Sigmoid colon (tissue), 7 donors: ENCODE measurements at regions of chr11 and their contacts with region 1.

Region 1: GRCh38 chr11:7513234-7514098 is at the start of gene PPFIBP2:
- DNase-seq: peak; percentile 89
- H3K4me3 ChIP-seq: peak within 1 kb of the TSS; percentile 53 to 81 (median 74)
- H3K27ac ChIP-seq: peak within 1 kb of the TSS; percentile 79 to 89 (median 84)
- H3K4me1 ChIP-seq: peaks cover 0 to 29% (median 21%) of the 10 kb centered on the region in 4 donors
- H3K27me3 ChIP-seq: no peaks in the 10 kb centered on the region
- CTCF ChIP-seq: peak; percentile 12 to 64 (median 56)
- EP300 ChIP-seq: no peak
- POLR2A ChIP-seq: peak; percentile 33 to 40
- total RNA-seq, gene PPFIBP2: 4.1 to 11.6 (median 9.2) TPM

Region 2: DNA sequence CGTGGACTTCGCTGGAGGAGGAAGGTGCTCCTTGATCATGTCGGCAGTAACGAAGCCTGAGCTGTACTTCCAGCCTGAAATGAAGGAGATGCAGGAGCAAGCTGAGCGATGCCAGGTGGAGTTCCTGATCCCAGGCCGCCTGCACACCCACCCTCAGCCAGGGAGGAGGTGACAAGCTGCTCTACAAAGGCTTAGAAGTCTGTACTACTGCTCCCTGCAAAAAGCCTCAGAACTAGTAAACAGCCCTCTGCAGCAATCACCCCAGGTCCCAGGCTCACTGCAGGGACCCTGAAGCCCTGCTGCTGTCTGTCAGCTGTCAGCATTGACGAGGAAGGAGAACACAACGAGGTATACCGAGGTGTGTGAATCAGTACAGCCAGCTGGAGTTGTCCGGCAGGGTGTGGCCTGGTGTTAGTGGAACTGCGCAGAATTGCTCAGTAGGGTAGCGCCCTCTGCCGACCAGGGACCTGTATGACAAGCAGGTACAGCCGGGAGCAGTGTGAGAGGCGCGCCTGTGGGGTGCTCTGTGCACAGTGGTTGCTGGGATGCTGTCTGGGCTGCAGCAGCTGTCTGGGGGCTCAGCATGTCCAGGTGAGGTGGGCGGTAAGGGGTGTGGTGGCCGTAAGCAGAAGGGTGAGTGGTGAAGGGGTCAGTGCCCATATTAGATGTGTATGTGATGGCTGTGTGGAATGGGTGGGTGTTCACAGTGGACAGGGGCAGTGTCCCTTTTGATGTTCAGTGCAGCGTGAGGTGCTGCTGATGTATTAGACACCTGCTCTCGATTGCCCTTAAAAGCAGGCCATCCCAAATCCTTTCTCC is 152.2 kb after region 1 on chr11:
- intact Hi-C with region 1: loop called (anchors 5 kb)
- DNase-seq: peak; percentile 87
- H3K4me3 ChIP-seq: no peak overlapping the region
- H3K27ac ChIP-seq: no peak overlapping the region
- H3K4me1 ChIP-seq: no peaks in the 10 kb centered on the region
- H3K27me3 ChIP-seq: no peaks in the 10 kb centered on the region
- CTCF ChIP-seq: peak; percentile 31 to 67 (median 40)
- EP300 ChIP-seq: no peak
- POLR2A ChIP-seq: no peak

Region 3: GRCh38 chr11:7986768-7987559 is 473.5 kb after region 1 on chr11 and contains the start of gene EIF3F:
- intact Hi-C with region 1: loop called (anchors 5 kb)
- DNase-seq: peak; percentile 97
- H3K4me3 ChIP-seq: peak within 1 kb of the TSS; percentile 68 to 89 (median 80)
- H3K27ac ChIP-seq: peak within 1 kb of the TSS; percentile 76 to 83 (median 80)
- H3K4me1 ChIP-seq: peaks cover 0 to 36% (median 23%) of the 10 kb centered on the region in 4 donors
- H3K27me3 ChIP-seq: no peaks in the 10 kb centered on the region
- CTCF ChIP-seq: peak; percentile 81 to 92 (median 85)
- EP300 ChIP-seq: no peak
- POLR2A ChIP-seq: peak in 1 of 2 donors; percentile 10
- total RNA-seq, gene EIF3F: 210 to 233 (median 224) TPM